ENCODE measurements at regions of chr3 and their contacts with region 1.

Region 1: GRCh38 chr3:46488735-46489361 is 8.9 kb upstream of the RTP3 start:
- DNase-seq: peak; percentile 95
- CTCF ChIP-seq: peak; percentile 100

Region 2: DNA sequence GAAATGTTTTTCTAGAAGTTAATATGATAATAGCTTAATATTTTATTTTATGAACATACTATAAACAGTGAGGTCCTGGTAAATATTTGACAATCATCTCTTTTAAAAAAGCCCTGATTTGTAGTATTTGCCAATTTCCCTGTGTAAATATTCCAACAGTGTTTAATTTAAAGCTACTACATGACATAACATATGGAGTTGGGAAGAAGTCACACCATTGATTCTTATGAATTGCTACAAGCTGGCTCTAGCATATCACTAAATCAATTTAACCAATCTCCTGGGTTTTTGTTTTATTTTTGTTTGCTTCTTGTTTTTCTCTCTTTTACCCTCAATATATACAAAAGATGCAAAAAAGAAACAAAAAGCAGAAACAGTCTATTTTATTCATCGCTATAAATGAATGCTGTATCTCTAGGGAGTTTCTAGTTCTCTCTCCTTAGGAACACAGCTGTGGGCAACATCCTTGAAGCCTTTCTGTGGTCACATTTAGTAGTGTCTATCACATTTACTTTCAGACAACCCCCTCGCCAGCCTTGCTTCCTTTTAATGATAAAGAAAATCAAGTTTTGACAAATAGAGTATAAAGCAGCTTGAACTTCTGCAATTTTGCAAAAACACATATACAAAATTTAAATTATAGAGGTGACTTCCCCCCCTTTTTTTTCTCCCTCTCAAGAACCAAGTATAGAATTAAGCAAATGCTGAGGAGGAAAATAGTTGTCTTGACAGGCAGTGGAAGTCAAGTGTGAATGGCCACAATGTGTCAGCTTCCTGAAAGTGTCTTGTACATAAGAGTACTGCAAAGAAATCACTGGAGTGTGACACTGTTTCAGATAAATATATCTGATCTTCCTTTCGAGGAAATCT is 302.1 kb before region 1 on chr3:
- CTCF ChIA-PET with region 1: no interaction called
- POLR2A ChIA-PET with region 1: no interaction called
- DNase-seq: peak; percentile 67
- CTCF ChIP-seq: no peak

Region 3: DNA sequence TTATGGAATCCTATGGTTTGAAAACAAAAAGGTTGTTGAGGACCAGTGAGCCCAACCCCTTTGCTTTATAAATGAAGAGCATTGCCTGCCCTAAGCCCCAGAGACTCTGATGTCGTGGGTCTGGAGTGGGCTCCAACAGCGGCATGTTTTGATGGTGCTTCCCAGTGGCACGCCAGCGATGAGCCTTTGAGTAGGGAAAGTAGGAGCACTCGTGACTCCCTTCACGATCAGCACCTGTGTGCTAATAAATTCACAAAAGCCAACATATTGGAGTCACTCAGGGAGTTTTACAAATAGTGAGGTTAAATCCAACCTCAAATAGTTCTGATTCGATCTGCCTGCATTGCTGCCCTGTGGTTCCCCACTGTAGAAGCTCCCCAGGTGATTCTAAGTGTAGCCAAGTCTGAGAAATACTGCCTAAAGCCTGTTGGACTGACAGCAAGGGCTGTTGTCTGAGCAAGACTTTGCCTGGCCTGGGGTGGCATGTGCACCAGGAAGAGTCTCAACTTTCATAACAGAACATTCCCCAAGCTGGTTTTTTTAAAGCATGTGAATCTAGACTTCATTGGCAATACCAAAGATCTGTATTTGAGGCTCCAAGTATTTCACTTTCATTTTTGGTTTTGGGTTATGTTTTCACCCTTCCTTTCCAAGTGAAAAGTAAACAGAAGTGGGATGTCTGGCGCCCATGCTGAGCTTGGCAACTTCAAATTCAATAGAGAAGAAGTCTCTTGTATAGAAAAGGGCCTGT is 108.2 kb before region 1 on chr3:
- CTCF ChIA-PET with region 1: no interaction called
- POLR2A ChIA-PET with region 1: no interaction called
- DNase-seq: no peak
- CTCF ChIP-seq: no peak

Region 4: DNA sequence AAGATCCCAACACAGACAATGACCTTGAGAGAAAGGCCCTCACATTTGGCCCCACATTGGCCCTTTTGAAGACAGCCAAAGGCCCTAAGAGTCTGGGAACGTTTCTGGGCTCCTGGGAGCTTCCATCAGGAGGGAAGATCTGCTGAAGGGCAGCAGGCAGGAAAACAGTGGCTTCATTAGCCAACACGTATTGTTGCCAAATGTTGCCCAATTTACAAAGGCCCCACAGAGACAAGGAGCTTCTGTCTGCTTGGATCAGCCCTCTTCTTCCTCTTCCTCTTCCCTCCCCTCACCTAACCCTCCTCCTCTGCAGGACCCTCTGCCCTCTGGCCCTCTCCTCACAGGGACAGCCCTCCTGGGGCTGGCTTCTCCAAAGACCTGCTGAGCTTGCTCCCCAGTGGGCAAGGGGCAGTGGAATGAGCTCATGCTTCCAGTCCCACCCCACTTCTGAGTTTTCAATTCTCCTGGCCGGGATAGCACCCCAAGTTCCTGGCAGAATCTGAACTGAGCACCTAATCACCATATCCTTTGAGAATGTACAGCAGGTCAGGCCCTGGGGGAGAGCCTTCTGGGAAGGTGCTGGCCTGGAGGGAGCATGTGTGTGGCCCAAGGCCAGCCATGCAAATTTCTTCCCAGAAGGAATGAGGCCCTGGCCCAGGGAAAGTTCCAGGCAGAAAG is 19.0 kb before region 1 on chr3:
- CTCF ChIA-PET with region 1: interaction called, 44 read pairs
- POLR2A ChIA-PET with region 1: no interaction called
- DNase-seq: no peak
- CTCF ChIP-seq: no peak

Region 5: GRCh38 chr3:46517016-46517793 is 28.4 kb after region 1 on chr3:
- CTCF ChIA-PET with region 1: interaction called, 25 read pairs
- POLR2A ChIA-PET with region 1: no interaction called
- DNase-seq: no peak
- CTCF ChIP-seq: no peak

Region 6: GRCh38 chr3:46549408-46549904 is 60.6 kb after region 1 on chr3:
- CTCF ChIA-PET with region 1: interaction called, 28 read pairs
- POLR2A ChIA-PET with region 1: no interaction called
- DNase-seq: no peak
- CTCF ChIP-seq: no peak

Region 7: GRCh38 chr3:46566036-46566641 is 77.3 kb after region 1 on chr3 and contains the start of gene LRRC2:
- CTCF ChIA-PET with region 1: interaction called, 134 read pairs
- POLR2A ChIA-PET with region 1: no interaction called
- DNase-seq: no peak
- CTCF ChIP-seq: no peak

Region 8: GRCh38 chr3:46607603-46608028 is 118.8 kb after region 1 on chr3:
- CTCF ChIA-PET with region 1: interaction called, 15 read pairs
- POLR2A ChIA-PET with region 1: no interaction called
- DNase-seq: no peak
- CTCF ChIP-seq: no peak

Region 9: GRCh38 chr3:46629551-46630517 is 141.0 kb after region 1 on chr3:
- CTCF ChIA-PET with region 1: interaction called, 168 read pairs
- POLR2A ChIA-PET with region 1: no interaction called
- DNase-seq: peak; percentile 86
- CTCF ChIP-seq: peak; percentile 97